ENCODE measurements at regions of chr15 and their contacts with region 1.

Region 1: GRCh38 chr15:101014921-101015841 is 96.0 kb downstream of the LRRK1 start:
- DNase-seq: peak; percentile 52 to 89 (median 74)
- ATAC-seq: peak; percentile 66 to 92 (median 80)
- H3K4me3 ChIP-seq: no peak overlapping the region
- H3K27ac ChIP-seq: no peak overlapping the region
- H3K4me1 ChIP-seq: no peaks in the 10 kb centered on the region
- H3K27me3 ChIP-seq: no peaks in the 10 kb centered on the region
- CTCF ChIP-seq: peak; percentile 44 to 86 (median 74)

Region 2: DNA sequence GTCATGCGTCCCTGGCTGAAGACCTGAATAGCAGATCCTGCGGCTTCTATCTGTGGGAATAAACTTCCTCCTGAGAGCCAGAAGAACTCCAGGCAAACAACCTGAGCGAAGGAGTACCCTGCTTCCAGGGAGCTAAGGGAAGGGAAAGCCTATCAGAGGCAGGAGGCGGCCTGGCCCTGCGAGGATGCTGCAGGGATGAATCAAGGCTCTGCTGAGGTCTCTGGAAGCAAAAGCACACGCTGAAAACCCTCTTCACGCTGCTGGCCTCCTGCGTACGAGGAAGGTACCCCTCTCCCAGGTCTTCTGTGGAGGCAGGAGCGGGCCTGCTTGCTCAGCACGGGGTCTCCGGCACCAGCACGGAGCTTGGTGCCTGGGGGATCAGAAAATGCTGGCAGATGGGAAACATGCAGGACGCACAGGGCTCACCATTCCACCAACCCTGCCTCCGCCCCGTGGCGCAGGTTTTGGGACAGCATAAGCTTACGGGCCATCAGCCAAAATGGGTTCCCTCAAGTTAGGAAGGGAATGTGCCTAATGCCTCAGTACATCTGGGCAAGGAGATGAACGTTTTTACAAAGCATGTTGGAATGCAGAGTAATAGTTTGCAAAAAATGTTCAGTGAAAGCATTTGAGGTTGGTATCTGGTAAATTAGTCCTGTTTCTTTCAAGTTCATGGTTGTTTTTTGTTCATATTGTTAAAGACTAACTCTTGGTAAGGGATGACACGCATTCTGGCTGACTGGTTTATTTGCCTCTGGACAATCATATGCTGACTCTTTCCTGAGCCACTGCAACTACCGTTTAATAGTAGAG is 164.4 kb after region 1 on chr15:
- intact Hi-C with region 1: no loop called
- DNase-seq: no peak
- ATAC-seq: no peak
- H3K4me3 ChIP-seq: no peak overlapping the region
- H3K27ac ChIP-seq: no peak overlapping the region
- H3K4me1 ChIP-seq: peaks cover 0 to 6% (median 0%) of the 10 kb centered on the region in 3 donors
- H3K27me3 ChIP-seq: no peaks in the 10 kb centered on the region
- CTCF ChIP-seq: no peak

Region 3: DNA sequence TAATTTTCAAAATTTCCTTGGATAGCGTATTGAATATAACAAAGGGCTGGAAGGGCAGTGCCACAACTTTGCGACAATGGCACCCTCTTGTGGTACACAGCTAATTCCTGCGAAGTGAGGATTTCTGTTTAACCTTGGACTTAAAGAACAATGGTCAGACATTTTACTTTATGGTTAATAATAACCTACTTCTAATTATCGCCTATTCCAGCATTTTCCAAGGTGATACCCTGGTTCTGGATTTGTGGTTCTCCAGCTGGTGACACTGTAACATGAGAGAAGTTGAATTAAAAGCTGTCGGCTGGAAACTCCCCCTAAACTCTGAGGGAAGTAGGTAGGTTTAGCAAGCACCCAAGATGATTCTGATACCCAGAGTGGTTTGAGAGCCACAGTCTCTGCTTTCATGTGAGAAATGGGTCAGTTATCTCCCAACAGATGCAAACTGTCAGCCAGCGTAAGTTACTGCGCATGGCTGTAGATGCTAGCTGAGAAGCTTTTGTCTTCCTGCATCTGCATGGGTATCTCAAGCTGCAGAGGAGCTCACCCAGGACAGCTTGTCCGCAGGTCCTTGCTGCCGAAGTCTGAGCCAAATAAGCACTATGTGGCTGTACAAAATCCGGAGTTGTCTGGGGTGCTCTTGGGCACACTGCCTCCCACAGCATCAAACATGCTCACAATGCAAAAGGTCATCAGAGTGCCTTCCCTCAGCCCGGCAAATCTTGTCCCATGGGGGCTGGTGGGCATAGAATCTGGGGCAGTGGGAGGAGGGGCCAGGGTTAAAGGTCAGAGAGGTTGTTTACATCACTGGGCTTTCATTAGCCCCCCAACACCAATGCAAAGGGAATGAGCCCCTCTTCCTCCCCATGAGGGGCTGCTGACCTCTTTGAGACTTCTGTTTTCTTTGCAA is 243.3 kb after region 1 on chr15:
- intact Hi-C with region 1: loop called in 2 of 3 experiments (anchors 5 kb)
- DNase-seq: peak in 3 of 6 donors; percentile 52 to 71 (median 53)
- ATAC-seq: peak; percentile 77 to 91 (median 90)
- H3K4me3 ChIP-seq: no peak overlapping the region
- H3K27ac ChIP-seq: no peak overlapping the region
- H3K4me1 ChIP-seq: peaks cover 0 to 2% (median 0%) of the 10 kb centered on the region in 3 donors
- H3K27me3 ChIP-seq: no peaks in the 10 kb centered on the region
- CTCF ChIP-seq: peak; percentile 32 to 80 (median 66)

Region 4: GRCh38 chr15:101269479-101270223 is 254.5 kb after region 1 on chr15:
- intact Hi-C with region 1: loop called in 1 of 3 experiments (anchors 5 kb)
- DNase-seq: no peak
- ATAC-seq: peak in 3 of 4 donors; percentile 15 to 45 (median 26)
- H3K4me3 ChIP-seq: no peak overlapping the region
- H3K27ac ChIP-seq: no peak overlapping the region
- H3K4me1 ChIP-seq: peaks cover 0 to 9% (median 4%) of the 10 kb centered on the region in 3 donors
- H3K27me3 ChIP-seq: no peaks in the 10 kb centered on the region
- CTCF ChIP-seq: no peak

Measured in pancreas (tissue), 10 donors.